Heart right ventricle (tissue), 16 donors: ENCODE measurements at regions of chr4 and their contacts with region 1.

Region 1: GRCh38 chr4:56764775-56765174 is 56.7 kb downstream of the SPINK2 start:
- DNase-seq: no peak
- ATAC-seq: no peak
- H3K4me3 ChIP-seq: no peak overlapping the region
- H3K27ac ChIP-seq: no peak overlapping the region
- H3K4me1 ChIP-seq: peaks cover 0 to 9% (median 0%) of the 10 kb centered on the region in 9 donors
- H3K27me3 ChIP-seq: peaks cover 0 to 25% (median 0%) of the 10 kb centered on the region in 7 donors
- CTCF ChIP-seq: no peak

Region 2: GRCh38 chr4:56653461-56654237 is 111.1 kb before region 1 on chr4:
- intact Hi-C with region 1: no loop called
- DNase-seq: no peak
- ATAC-seq: no peak
- H3K4me3 ChIP-seq: no peak overlapping the region
- H3K27ac ChIP-seq: peak overlapping the region in 1 of 10 donors; percentile 1
- H3K4me1 ChIP-seq: peaks cover 0 to 49% (median 20%) of the 10 kb centered on the region in 9 donors
- H3K27me3 ChIP-seq: peaks cover 4 to 59% (median 46%) of the 10 kb centered on the region in 7 donors
- CTCF ChIP-seq: no peak

Region 3: GRCh38 chr4:56723659-56724230 is 41.0 kb before region 1 on chr4:
- intact Hi-C with region 1: loop called in 1 of 10 experiments (anchors 2 kb)
- DNase-seq: no peak
- ATAC-seq: no peak
- H3K4me3 ChIP-seq: no peak overlapping the region
- H3K27ac ChIP-seq: no peak overlapping the region
- H3K4me1 ChIP-seq: peaks cover 0 to 5% (median 0%) of the 10 kb centered on the region in 9 donors
- H3K27me3 ChIP-seq: no peaks in the 10 kb centered on the region
- CTCF ChIP-seq: no peak